ENCODE measurements at regions of chr19 and their contacts with region 1.

Region 1: DNA sequence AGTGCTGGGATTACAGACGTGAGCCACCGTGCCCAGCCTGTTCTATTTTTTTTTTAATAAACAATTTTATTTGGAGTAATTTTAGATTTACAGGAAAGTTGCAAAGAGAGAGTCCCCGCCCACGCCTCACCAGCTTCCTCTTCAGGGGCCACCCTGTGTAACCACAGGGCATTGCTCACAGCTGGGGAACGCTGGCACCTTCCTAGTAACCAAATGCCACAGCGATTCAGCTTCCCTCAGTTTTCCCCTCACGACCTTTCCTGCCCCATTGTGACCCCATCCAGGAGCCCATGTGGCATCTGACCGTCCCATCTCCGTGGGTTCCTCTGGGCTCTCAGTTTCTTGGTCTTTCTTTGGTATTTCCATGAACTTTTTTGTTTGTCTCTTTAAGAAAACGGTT is 83.9 kb downstream of the GNG7 start:
- DNase-seq: no peak
- CTCF ChIP-seq: no peak

Region 2: DNA sequence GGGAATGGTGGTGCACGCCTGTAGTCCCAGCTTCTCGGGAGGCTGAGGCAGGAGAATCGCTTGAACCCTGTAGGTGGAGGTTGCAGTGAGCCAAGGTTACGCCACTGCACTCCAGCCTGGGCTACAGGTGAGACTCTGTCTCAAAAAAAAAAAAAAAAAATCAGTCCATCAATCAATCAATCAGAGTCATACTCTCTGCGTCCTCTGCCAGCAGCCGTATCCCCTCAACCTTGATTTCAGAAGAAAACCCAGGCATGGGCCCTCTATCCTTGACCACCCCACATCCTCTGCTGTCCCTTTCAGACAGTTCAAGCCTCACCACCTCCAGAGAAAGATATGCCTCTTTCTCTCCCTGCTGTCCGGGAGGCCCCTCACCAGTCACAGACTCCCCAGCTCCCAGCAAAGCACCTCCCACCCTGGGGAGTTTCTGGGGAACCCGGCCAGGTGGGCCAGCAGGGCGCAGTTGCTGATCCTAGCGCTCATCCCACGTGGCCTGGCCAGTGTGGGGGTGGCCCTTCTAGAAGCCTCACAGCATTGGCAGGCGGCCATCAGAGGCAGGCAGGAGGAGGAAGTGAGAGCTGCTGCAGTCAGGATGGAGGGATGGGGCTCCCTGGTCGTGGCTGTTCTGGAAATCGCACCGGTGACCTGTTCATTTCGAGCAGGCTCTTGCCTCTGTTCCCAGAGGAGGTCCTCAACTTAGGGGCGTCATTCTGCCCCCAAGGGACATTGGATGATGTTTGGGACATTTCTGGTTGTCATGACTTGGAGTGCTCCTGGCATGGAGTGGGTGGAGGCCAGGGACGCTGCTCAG is 352.2 kb before region 1 on chr19:
- CTCF ChIA-PET with region 1: no interaction called
- POLR2A ChIA-PET with region 1: no interaction called
- DNase-seq: peak; percentile 75
- CTCF ChIP-seq: no peak

Region 3: DNA sequence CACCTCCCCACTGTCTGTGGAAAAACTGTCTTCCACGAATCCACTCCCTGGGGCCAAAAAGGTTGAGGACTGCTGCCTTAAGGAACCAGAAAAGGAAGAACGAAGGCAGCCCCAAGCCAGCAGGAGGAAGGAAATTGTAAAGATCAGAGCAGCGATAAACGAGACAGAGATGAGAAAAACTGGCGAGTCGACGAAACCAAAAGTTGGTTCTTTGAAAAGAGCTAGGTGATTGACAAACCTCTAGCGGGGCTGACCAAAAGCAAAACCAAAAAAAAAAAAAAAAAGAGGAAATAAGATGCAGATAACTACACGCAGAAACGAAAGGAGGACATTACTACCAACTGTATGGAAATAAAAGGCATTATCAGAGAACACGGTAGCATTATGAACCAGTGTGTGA is 65.8 kb before region 1 on chr19:
- CTCF ChIA-PET with region 1: interaction called, 5 read pairs
- POLR2A ChIA-PET with region 1: interaction called, 12 read pairs
- DNase-seq: peak; percentile 85
- CTCF ChIP-seq: no peak

Region 4: GRCh38 chr19:2663920-2664571 is 45.4 kb after region 1 on chr19:
- CTCF ChIA-PET with region 1: no interaction called
- POLR2A ChIA-PET with region 1: no interaction called
- DNase-seq: peak; percentile 74
- CTCF ChIP-seq: peak; percentile 27